Heart right ventricle (tissue), 16 donors: ENCODE measurements at regions of chr2 and their contacts with region 1.

Region 1: DNA sequence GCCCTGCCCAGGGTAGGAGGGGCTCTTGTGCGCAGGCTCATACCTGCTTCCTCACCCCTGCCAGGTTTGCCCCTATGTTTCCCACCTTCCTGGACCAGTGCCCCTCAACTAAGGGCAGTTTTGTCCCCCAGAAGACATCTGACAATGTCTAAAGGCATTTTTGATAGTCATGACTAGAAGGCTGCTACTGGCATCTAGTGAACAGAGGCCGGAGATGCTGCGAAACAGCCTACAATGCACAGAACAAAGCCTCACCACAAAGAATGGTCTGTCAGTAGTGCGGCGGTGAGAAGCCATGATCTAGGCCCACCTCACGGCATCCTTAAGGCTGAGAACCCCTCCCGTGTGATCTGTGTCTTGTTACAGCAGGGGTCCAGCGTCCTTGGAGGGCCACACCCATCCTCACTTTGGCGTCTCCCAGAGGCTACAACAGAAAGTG is 96.0 kb downstream of the TMEM17 start:
- DNase-seq: peak in 1 of 2 donors; percentile 32
- ATAC-seq: peak in 3 of 8 donors; percentile 29 to 47 (median 36)
- H3K4me3 ChIP-seq: no peak overlapping the region
- H3K27ac ChIP-seq: peak overlapping the region in 9 of 10 donors; percentile 15 to 83 (median 54)
- H3K4me1 ChIP-seq: peaks cover 9 to 55% (median 35%) of the 10 kb centered on the region in 9 donors
- H3K27me3 ChIP-seq: no peaks in the 10 kb centered on the region
- CTCF ChIP-seq: peak in 7 of 9 donors; percentile 30 to 69 (median 41)

Region 2: GRCh38 chr2:61910603-61911002 is 499.4 kb before region 1 on chr2:
- intact Hi-C with region 1: loop called in 3 of 10 experiments (anchors 2 to 5 kb)
- DNase-seq: no peak
- ATAC-seq: no peak
- H3K4me3 ChIP-seq: no peak overlapping the region
- H3K27ac ChIP-seq: no peak overlapping the region
- H3K4me1 ChIP-seq: peaks cover 0 to 32% (median 24%) of the 10 kb centered on the region in 9 donors
- H3K27me3 ChIP-seq: no peaks in the 10 kb centered on the region
- CTCF ChIP-seq: peak in 6 of 9 donors; percentile 12 to 23 (median 20)

Region 3: DNA sequence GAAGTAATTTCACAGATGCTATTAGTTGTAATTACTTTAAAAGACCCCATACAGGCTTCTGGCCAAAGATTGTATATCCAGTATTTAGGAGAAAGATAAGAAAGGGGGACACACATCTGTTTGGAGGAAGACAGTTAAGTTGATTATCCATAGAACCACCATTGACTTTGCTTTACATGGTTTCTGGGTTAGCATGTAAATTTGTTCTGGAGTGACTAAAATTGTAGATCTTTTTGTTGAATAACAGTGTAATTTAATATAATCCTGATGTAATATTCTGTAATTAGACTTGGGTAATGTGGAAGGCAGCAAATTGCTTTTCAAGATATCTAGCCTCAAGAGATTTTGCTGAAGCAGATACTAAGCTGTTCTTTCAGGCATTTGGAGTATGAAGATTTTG is 487.3 kb before region 1 on chr2:
- intact Hi-C with region 1: loop called (anchors 1 to 5 kb)
- DNase-seq: no peak
- ATAC-seq: no peak
- H3K4me3 ChIP-seq: no peak overlapping the region
- H3K27ac ChIP-seq: peak overlapping the region in 5 of 10 donors; percentile 41 to 69 (median 52)
- H3K4me1 ChIP-seq: peaks cover 0 to 43% (median 25%) of the 10 kb centered on the region in 9 donors
- H3K27me3 ChIP-seq: no peaks in the 10 kb centered on the region
- CTCF ChIP-seq: no peak

Region 4: GRCh38 chr2:61993444-61994024 is 416.5 kb before region 1 on chr2:
- intact Hi-C with region 1: loop called (anchors 1 to 5 kb)
- DNase-seq: peak in 1 of 2 donors; percentile 34
- ATAC-seq: peak in 7 of 8 donors; percentile 49 to 84 (median 74)
- H3K4me3 ChIP-seq: no peak overlapping the region
- H3K27ac ChIP-seq: no peak overlapping the region
- H3K4me1 ChIP-seq: peaks cover 0 to 35% (median 19%) of the 10 kb centered on the region in 9 donors
- H3K27me3 ChIP-seq: no peaks in the 10 kb centered on the region
- CTCF ChIP-seq: peak; percentile 37 to 87 (median 70)

Region 5: DNA sequence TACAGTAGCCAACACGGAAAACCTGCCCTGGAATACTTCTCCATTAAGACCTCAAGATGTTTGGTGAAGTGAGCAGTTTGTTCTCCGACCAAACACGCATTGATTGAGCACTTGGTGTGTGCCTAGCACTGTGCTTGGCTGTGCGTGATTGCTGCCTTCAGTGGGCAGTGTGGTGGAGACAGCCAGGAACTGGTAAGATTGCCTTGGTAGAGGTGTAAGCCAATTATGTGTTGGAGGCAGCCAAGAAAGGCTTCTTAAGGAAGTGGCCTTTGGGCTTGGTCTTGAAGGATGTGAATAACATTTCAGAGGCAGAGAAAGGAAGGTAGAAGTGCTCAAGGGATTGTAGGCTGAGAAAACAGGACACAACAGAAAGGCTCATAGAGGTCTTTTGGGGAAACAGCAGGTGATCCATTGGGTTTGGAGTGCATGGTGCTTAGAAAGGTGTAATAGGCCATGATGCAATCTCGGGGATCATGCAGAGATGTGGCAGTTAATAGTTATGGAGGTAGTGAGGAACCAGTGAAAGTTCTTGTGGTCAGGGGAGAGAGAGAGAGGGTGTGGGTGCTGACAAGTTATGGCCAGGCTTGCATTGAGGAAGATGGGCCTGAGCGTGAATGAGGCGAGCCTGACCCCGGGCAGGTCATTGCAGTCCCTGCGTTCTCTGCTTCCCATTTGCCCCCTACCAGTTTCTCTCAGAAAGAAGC is 207.9 kb before region 1 on chr2:
- intact Hi-C with region 1: loop called in 9 of 10 experiments (anchors 2 to 10 kb)
- DNase-seq: no peak
- ATAC-seq: no peak
- H3K4me3 ChIP-seq: no peak overlapping the region
- H3K27ac ChIP-seq: peak overlapping the region in 3 of 10 donors; percentile 19 to 50 (median 35)
- H3K4me1 ChIP-seq: peaks cover 4 to 94% (median 79%) of the 10 kb centered on the region in 9 donors
- H3K27me3 ChIP-seq: no peaks in the 10 kb centered on the region
- CTCF ChIP-seq: no peak

Region 6: DNA sequence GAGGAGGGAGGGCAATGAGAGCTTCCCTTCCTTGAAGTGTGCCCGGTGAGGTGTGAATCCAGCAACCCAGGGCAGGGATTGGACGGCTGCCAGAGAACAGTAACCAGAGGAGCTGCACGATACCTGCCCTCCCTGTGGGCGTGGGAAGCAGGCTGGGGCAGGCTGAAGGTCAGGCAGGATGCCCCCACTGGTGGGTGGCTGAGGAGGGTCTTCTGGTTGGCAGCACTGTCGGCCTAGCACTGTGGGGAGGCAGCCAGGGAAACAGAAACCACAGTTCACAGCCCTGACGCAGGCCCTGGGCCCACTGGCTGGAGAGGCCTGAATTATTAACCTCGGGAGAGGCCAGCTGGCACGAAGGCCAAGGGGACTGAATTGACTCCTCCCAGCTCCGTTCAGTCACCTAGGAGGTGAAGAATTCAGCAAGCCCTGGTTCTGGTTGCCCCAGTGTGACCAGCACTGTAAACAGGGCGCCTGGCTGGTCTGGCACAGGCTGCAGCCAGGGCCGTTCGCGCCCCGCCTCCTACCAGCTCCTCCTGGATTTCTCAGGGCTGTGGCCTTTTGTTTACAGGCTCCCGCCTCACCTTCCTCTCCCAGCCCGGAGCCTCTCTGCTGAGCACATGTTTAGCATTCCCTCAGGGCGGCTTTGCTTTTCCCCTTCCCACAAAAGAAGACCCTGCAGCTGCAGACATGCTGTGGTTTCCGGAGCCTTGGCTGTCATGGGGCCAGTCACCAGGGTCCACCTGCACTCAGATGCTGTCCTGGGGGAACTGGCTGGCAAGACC is 116.4 kb before region 1 on chr2:
- intact Hi-C with region 1: loop called in 2 of 10 experiments (anchors 5 to 10 kb)
- DNase-seq: peak; percentile 47 to 58
- ATAC-seq: peak; percentile 71 to 85 (median 80)
- H3K4me3 ChIP-seq: peak overlapping the region in 1 of 10 donors; percentile 5
- H3K27ac ChIP-seq: peak overlapping the region; percentile 15 to 69 (median 64)
- H3K4me1 ChIP-seq: peaks cover 13 to 56% (median 38%) of the 10 kb centered on the region in 9 donors
- H3K27me3 ChIP-seq: no peaks in the 10 kb centered on the region
- CTCF ChIP-seq: no peak

Region 7: GRCh38 chr2:62306751-62307468 is 103.1 kb before region 1 on chr2:
- intact Hi-C with region 1: loop called in 1 of 10 experiments (anchors 5 kb)
- DNase-seq: no peak
- ATAC-seq: peak in 4 of 8 donors; percentile 10 to 31 (median 20)
- H3K4me3 ChIP-seq: no peak overlapping the region
- H3K27ac ChIP-seq: peak overlapping the region in 7 of 10 donors; percentile 37 to 64 (median 52)
- H3K4me1 ChIP-seq: peaks cover 8 to 74% (median 56%) of the 10 kb centered on the region in 9 donors
- H3K27me3 ChIP-seq: no peaks in the 10 kb centered on the region
- CTCF ChIP-seq: no peak

Region 8: DNA sequence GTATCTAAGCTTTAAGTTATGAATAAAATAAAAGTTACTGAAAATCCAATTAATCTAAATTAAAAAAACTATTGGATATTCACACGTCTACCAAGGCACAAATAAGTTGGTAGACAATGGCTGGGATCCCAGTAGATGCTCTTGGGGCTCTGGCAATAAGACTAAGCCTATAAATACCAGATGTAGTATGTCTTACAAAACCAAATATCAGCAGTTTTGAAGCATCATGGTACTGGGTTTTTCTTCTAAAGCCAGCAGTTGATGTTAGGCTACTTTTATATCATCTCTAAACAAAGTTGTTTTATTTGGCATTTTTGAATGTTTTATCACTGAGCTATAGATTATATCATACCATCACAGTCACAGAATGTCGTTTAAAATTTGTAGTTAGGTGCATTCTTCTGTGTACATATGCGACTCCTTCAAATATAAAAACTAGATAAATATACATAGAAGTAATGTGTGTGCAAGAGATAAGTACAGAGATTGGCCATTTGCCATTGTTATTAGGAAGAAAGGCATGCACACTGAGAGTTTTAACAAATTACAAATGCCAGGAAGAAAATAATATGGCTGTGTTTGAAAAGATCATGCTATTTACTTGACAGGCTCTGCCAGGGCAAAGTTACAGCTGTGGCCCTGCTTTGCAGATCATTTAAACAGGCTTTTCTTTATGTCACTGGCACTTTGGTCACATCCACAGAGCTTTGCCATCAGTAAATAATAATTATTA is 117.6 kb after region 1 on chr2:
- intact Hi-C with region 1: no loop called
- DNase-seq: no peak
- ATAC-seq: no peak
- H3K4me3 ChIP-seq: no peak overlapping the region
- H3K27ac ChIP-seq: no peak overlapping the region
- H3K4me1 ChIP-seq: no peaks in the 10 kb centered on the region
- H3K27me3 ChIP-seq: no peaks in the 10 kb centered on the region
- CTCF ChIP-seq: no peak